Head of caudate nucleus (tissue), 42 donors: ENCODE measurements at regions of chr14 and their contacts with region 1.

Region 1: GRCh38 chr14:92951912-92952471 is 29.0 kb downstream of the CHGA start:
- DNase-seq: peak; percentile 70 to 97 (median 90)

Region 2: DNA sequence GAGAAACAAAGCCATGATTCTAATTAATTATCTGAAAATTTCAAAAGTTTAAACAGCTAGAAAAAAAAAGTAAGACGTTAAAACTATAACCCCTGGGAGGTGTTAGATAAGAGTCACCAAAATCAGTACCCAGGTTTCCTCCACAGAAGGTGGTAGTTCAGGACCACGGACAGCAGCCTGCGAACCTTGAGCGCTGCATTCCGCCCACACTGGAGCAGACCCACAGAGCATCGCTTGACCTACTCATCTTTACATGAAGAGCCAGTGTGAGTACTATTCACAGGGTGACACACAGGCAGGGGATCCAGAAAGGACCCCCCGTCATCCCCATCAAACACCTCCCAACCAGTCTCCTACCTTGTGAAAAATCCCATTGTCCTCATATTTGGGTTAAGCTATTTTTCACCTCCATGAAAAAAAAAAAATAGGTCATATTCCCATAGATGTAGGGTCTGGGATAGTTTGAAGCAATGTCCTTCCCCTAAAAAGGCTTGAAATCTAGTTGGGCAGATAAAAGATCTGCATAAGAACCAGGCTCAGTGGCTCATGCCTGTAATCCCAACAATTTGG is 37.8 kb before region 1 on chr14:
- intact Hi-C with region 1: no loop called
- DNase-seq: peak in 5 of 42 donors; percentile 25 to 75 (median 30)

Region 3: GRCh38 chr14:93007225-93007997 is 55.4 kb after region 1 on chr14:
- intact Hi-C with region 1: loop called (anchors 10 kb)
- DNase-seq: peak in 7 of 42 donors; percentile 38 to 82 (median 62)

Region 4: DNA sequence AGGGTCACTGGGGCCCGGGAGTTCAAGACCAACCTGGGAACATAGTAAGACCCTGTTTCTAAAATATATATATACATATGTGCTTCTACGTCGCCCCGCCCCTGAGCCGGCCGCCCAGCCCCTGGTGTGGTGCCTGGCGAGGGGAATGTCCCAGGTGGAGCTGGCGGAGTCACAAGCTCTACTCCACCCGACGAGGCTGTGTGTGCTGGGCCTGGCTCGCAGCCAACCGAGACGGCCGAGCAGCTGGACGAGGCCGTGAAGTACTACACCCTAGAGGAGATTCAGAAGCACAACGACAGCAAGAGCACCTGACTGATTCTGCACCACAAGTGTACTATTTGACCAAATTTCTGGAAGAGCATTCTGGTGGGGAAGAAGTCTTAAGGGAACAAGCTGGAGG is 185.9 kb after region 1 on chr14:
- intact Hi-C with region 1: loop called (anchors 2 kb)
- DNase-seq: no peak